IMR-90 (cell line): ENCODE measurements at regions of chr6 and their contacts with region 1.

Region 1: GRCh38 chr6:45791211-45792168 is 224.2 kb downstream of the CLIC5 start:
- DNase-seq: peak; percentile 52
- ATAC-seq: peak; percentile 91
- H3K4me3 ChIP-seq: no peak overlapping the region
- H3K27ac ChIP-seq: peak overlapping the region; percentile 78
- H3K4me1 ChIP-seq: peaks cover 5% of the 10 kb centered on the region
- H3K27me3 ChIP-seq: no peaks in the 10 kb centered on the region
- CTCF ChIP-seq: no peak
- POLR2A ChIP-seq: no peak
- RAD21 ChIP-seq: no peak

Region 2: DNA sequence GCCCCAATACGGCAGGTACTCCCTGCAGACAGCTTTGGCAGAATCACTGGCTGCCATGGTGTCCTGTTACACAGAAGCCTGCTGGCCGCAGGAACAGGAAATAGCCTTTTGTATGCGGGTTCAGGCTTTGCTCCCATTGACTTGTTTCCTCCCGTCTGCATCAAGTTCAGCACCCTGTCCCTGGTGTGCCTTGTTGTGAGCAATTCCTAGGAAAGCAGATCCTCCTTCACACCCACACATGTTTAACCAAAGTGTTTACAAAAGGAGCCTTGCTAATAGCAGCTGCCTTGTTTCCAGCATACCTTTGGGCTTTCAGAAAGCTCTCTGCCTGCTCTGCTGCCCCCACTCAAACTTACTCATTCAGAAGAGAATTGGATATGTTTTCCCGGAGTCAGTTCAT is 286.5 kb before region 1 on chr6:
- CTCF ChIA-PET with region 1: no interaction called
- POLR2A ChIA-PET with region 1: no interaction called
- dilution Hi-C with region 1: no loop called
- in situ Hi-C with region 1: no loop called
- intact Hi-C with region 1: loop called (anchors 10 kb)
- DNase-seq: peak; percentile 98
- ATAC-seq: peak; percentile 93
- H3K4me3 ChIP-seq: no peak overlapping the region
- H3K27ac ChIP-seq: peak overlapping the region; percentile 42
- H3K4me1 ChIP-seq: peaks cover 10% of the 10 kb centered on the region
- H3K27me3 ChIP-seq: no peaks in the 10 kb centered on the region
- CTCF ChIP-seq: no peak
- POLR2A ChIP-seq: no peak
- RAD21 ChIP-seq: peak; percentile 30; the same call in 1 of the 2 replicates

Region 3: DNA sequence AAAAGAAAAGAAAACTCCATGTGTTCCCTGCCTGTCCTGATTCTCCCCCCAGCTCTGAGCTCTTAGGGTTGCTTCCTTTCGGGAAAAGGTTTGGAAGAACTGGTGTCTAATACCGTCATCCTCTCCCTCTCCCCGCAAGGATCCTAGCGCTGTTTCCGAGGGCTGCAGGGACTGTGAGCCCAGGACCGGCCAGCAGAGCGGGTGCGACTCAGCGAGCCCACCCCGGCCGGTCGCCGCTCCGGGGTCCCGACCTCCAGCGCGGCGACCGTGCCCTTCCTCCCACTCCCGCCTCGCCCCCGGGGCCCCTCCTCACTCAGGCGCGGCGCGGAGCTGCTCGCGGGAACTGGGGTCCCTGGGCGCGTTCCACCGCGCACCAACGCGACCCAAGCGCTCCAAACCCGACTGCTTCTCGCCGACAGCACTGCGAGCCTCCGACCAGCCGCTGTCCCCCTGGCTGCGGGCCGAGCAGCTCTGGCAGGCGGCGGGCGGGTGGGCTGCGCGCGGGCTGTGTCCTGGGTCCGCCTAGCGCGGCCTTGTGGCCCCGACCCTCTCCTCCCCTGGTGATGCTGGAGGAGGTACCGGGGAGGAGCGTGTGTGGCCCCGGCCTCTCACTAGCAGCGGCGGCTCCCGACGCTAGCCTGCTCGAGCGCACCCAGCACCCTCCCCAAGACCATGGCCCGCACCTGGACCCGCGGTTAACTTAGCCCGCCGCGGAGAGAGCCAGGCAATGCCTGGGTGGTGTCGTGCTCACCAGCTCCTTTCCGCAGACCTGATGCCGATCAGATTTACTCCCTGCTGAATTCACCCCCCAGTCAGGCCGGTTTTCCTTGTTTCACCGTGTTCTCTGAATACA is 943.6 kb after region 1 on chr6 and contains the start of gene PLA2G7:
- CTCF ChIA-PET with region 1: no interaction called
- POLR2A ChIA-PET with region 1: no interaction called
- dilution Hi-C with region 1: no loop called
- in situ Hi-C with region 1: no loop called
- intact Hi-C with region 1: no loop called
- DNase-seq: no peak
- ATAC-seq: peak; percentile 40
- H3K4me3 ChIP-seq: peak within 1 kb of the TSS; percentile 29; the same call in 1 of the 2 replicates
- H3K27ac ChIP-seq: no peak within 1 kb of the TSS
- H3K4me1 ChIP-seq: 0 out of 2 replicates have a peak, but pooled peaks cover 2% of the 10 kb centered on the region
- H3K27me3 ChIP-seq: peaks cover 30% of the 10 kb centered on the region
- CTCF ChIP-seq: no peak
- POLR2A ChIP-seq: no peak
- RAD21 ChIP-seq: no peak
- total RNA-seq, gene PLA2G7: not detected in 2 replicates